Ascending aorta (tissue), 2 donors: ENCODE measurements at regions of chr6 and their contacts with region 1.

Region 1: GRCh38 chr6:168274037-168274952 is 45.3 kb downstream of the DACT2 start:
- DNase-seq: peak in 1 of 2 donors; percentile 39
- H3K4me3 ChIP-seq: no peak overlapping the region
- H3K27ac ChIP-seq: no peak overlapping the region
- H3K4me1 ChIP-seq: no peaks in the 10 kb centered on the region
- H3K27me3 ChIP-seq: no peaks in the 10 kb centered on the region
- CTCF ChIP-seq: no peak

Region 2: GRCh38 chr6:168050881-168051586 is 223.3 kb before region 1 on chr6:
- intact Hi-C with region 1: loop called (anchors 10 kb)
- DNase-seq: peak in 1 of 2 donors; percentile 59
- H3K4me3 ChIP-seq: no peak overlapping the region
- H3K27ac ChIP-seq: no peak overlapping the region
- H3K4me1 ChIP-seq: peaks cover 0 to 6% of the 10 kb centered on the region in 2 donors
- H3K27me3 ChIP-seq: no peaks in the 10 kb centered on the region
- CTCF ChIP-seq: no peak

Region 3: GRCh38 chr6:168342641-168343040 is 68.3 kb after region 1 on chr6:
- intact Hi-C with region 1: no loop called
- DNase-seq: no peak
- H3K4me3 ChIP-seq: no peak overlapping the region
- H3K27ac ChIP-seq: no peak overlapping the region
- H3K4me1 ChIP-seq: no peaks in the 10 kb centered on the region
- H3K27me3 ChIP-seq: no peaks in the 10 kb centered on the region
- CTCF ChIP-seq: no peak

Region 4: DNA sequence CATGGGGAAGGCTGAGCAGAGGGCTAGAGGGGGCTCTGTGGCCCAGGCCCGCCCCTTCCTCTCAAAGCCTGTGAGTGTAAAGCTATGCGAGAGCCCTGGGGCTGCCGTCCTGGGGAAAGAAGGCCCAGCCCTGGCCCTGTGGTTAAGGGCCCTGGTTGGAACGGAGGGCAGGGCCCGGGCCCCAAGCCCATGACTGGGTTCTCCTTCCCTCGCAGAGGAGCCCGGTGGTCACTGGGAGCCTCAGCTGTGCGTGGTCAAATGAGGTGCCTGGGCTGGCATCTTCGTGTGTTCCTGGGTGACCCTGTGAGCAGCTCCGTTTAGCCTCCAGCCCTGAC is 222.7 kb after region 1 on chr6:
- intact Hi-C with region 1: no loop called
- DNase-seq: no peak
- H3K4me3 ChIP-seq: no peak overlapping the region
- H3K27ac ChIP-seq: peak overlapping the region in 1 of 2 donors; percentile 14
- H3K4me1 ChIP-seq: peaks cover 0 to 10% of the 10 kb centered on the region in 2 donors
- H3K27me3 ChIP-seq: no peaks in the 10 kb centered on the region
- CTCF ChIP-seq: no peak